CD8-positive, alpha-beta T cell (primary cell): ENCODE measurements at regions of chr22 and their contacts with region 1.

Region 1: GRCh38 chr22:42856865-42857704 is at the start of gene ARFGAP3:
- DNase-seq: peak; percentile 89 to 98 (median 94)
- ATAC-seq: peak; percentile 95
- H3K4me3 ChIP-seq: peak within 1 kb of the TSS; percentile 85 to 91
- H3K4me3 Mint-ChIP-seq: peak within 1 kb of the TSS; percentile 80
- H3K27ac ChIP-seq: peak within 1 kb of the TSS; percentile 90 to 92
- H3K27ac Mint-ChIP-seq: peak within 1 kb of the TSS; percentile 85
- H3K4me1 ChIP-seq: peaks cover 24% of the 10 kb centered on the region
- H3K4me1 Mint-ChIP-seq: peaks cover 11% of the 10 kb centered on the region
- H3K27me3 ChIP-seq: no peaks in the 10 kb centered on the region
- H3K27me3 Mint-ChIP-seq: no peaks in the 10 kb centered on the region
- CTCF ChIP-seq: no peak
- total RNA-seq, gene ARFGAP3: 25.4 TPM

Region 2: DNA sequence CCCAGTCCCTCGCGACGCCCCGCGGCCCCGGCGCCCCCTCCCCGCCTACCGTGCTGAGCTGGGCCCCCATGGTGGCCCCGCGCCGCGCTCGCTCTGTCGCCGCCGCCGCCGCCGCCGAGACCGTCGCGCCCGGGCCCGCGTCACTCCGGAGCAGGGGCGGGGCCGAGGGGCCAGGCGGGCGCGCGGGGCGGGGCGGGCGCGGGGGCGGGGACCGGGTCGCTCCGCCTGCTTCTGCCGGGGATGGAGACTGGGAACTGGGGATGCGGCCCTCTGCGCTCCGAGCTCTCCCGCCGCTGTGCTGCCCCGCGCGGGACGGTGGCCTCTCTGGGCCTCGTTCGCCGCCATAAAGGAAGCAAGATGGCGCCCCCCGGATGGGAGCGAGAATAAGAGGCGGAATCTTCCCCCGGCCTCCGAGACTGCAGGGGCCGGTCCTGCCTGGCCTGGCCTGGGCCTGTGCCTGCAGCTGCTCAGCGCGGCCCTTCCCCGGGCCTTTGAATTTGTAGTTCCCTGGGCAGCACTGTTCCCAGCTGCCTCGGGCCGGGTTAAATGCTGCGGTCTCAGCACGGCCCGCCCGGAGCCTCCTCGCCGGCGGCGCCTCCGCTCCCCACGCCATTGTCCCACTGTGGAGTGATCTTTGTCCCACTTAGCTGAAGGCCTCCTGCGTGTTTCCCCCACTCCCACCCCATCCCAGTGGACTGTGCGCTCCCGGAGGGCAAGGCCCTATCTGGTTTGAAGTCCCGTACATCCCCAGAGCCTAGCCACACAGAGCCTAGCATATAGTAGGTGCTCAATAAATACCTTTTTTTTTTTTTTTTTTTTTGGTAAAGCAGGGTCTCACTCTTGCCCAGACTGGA is 207.6 kb before region 1 on chr22 and contains the start of gene CYB5R3:
- CTCF ChIA-PET with region 1: no interaction called
- POLR2A ChIA-PET with region 1: no interaction called
- intact Hi-C with region 1: loop called in 1 of 2 experiments (anchors 10 kb)
- DNase-seq: peak; percentile 41 to 84 (median 71)
- ATAC-seq: peak; percentile 78
- H3K4me3 ChIP-seq: peak within 1 kb of the TSS; percentile 73 to 99
- H3K4me3 Mint-ChIP-seq: peak within 1 kb of the TSS; percentile 99
- H3K27ac ChIP-seq: peak within 1 kb of the TSS; percentile 81 to 90
- H3K27ac Mint-ChIP-seq: peak within 1 kb of the TSS; percentile 100
- H3K4me1 ChIP-seq: peaks cover 39% of the 10 kb centered on the region
- H3K4me1 Mint-ChIP-seq: peaks cover 31% of the 10 kb centered on the region
- H3K27me3 ChIP-seq: no peaks in the 10 kb centered on the region
- H3K27me3 Mint-ChIP-seq: peaks cover 2% of the 10 kb centered on the region
- CTCF ChIP-seq: no peak
- total RNA-seq, gene CYB5R3: 43.8 to 50.2 TPM

Region 3: GRCh38 chr22:42868751-42869251 is 11.7 kb after region 1 on chr22:
- CTCF ChIA-PET with region 1: interaction called, 14 read pairs
- POLR2A ChIA-PET with region 1: interaction called, 4 read pairs
- intact Hi-C with region 1: no loop called
- DNase-seq: no peak
- ATAC-seq: no peak
- H3K4me3 ChIP-seq: no peak overlapping the region
- H3K4me3 Mint-ChIP-seq: no peak overlapping the region
- H3K27ac ChIP-seq: no peak overlapping the region
- H3K27ac Mint-ChIP-seq: no peak overlapping the region
- H3K4me1 ChIP-seq: no peaks in the 10 kb centered on the region
- H3K4me1 Mint-ChIP-seq: peaks cover 2% of the 10 kb centered on the region
- H3K27me3 ChIP-seq: no peaks in the 10 kb centered on the region
- H3K27me3 Mint-ChIP-seq: no peaks in the 10 kb centered on the region
- CTCF ChIP-seq: no peak

Region 4: DNA sequence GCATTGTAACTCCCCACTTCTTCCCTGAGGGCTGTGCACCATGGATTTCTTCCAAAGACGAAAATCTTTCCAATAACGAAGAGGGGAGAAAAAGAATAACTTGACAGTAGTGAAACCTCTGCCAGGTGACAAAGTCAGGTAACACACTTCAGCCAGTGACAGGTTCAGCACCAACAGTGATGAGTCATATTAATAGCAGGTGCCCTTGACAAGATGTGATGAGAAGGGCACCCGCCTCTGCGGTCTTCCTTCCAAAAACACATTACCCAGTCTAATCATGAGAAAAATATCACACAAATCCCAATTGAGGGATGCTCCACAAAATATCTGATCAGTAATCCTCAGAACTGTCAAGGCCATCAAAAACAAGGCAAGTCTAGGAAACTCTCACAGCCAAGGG is 797.2 kb after region 1 on chr22:
- CTCF ChIA-PET with region 1: no interaction called
- POLR2A ChIA-PET with region 1: no interaction called
- intact Hi-C with region 1: no loop called
- DNase-seq: no peak
- ATAC-seq: no peak
- H3K4me3 ChIP-seq: no peak overlapping the region
- H3K4me3 Mint-ChIP-seq: no peak overlapping the region
- H3K27ac ChIP-seq: no peak overlapping the region
- H3K27ac Mint-ChIP-seq: no peak overlapping the region
- H3K4me1 ChIP-seq: no peaks in the 10 kb centered on the region
- H3K4me1 Mint-ChIP-seq: no peaks in the 10 kb centered on the region
- H3K27me3 ChIP-seq: no peaks in the 10 kb centered on the region
- H3K27me3 Mint-ChIP-seq: peaks cover 9% of the 10 kb centered on the region
- CTCF ChIP-seq: no peak